ENCODE measurements at regions of chr18 and their contacts with region 1.

Region 1: DNA sequence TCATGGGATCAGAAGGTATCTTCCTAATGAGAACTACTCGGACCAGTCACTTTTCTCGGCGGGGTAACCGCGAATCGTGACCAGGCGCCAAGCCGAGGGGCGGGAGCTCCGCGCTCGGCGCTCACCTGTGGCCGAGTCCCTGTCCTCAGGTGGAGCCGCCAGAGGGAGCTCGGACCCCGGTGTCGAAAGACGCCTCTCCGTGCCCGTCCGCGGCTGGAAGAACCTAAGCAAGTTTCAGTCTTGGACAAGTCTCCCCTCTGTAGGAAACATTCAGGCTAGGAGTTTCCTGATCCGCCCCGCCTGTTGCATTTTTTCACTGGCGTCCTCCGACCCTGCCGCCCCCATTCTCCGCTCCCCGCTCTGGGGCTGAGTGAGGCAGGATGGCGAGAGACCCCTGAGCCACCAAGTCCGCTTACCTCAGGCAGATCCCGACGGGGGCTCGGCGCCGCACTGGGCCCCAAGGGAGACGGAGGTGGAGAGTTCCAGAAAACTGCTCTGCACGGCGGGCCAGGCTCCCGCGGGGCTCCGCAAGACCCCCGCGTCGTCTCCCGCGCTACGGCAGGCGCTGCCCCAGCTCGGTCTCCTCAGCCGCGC is 478 bp downstream of the DSEL start:
- DNase-seq: peak; percentile 67 to 77
- ATAC-seq: peak; percentile 68 to 69
- H3K4me3 ChIP-seq: peak overlapping the region; percentile 60 to 95 (median 78)
- H3K27ac ChIP-seq: peak overlapping the region; percentile 71 to 85 (median 77)
- H3K4me1 ChIP-seq: peaks cover 6 to 13% of the 10 kb centered on the region in 2 donors
- H3K27me3 ChIP-seq: no peaks in the 10 kb centered on the region
- CTCF ChIP-seq: peak; percentile 39 to 78 (median 68)
- POLR2A ChIP-seq: no peak

Region 2: GRCh38 chr18:66724664-66725356 is 791.2 kb before region 1 on chr18:
- in situ Hi-C with region 1: no loop called
- intact Hi-C with region 1: no loop called
- DNase-seq: peak in 1 of 2 donors; percentile 14
- ATAC-seq: no peak
- H3K4me3 ChIP-seq: no peak overlapping the region
- H3K27ac ChIP-seq: no peak overlapping the region
- H3K4me1 ChIP-seq: no peaks in the 10 kb centered on the region
- H3K27me3 ChIP-seq: no peaks in the 10 kb centered on the region
- CTCF ChIP-seq: no peak
- POLR2A ChIP-seq: no peak

Region 3: DNA sequence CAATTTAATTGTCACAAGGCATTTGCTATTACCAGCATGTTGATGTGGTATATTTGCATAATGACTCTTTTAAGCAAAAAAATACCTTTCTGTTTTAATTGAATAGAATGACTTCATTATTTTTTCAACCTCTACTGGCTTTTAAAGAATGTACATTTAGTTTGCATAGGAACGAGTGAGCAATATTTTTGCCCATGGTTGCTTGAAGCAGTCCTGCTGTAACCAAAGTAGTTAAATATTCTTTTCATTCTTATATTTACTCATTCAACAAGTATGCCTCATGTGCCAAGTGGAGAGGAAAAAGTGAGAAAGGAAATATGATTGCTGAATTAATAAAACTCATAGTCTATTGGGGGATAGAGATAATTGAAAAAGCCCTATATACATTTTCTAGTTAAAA is 184.2 kb before region 1 on chr18:
- in situ Hi-C with region 1: no loop called
- intact Hi-C with region 1: no loop called
- DNase-seq: no peak
- ATAC-seq: no peak
- H3K4me3 ChIP-seq: no peak overlapping the region
- H3K27ac ChIP-seq: no peak overlapping the region
- H3K4me1 ChIP-seq: no peaks in the 10 kb centered on the region
- H3K27me3 ChIP-seq: no peaks in the 10 kb centered on the region
- CTCF ChIP-seq: no peak
- POLR2A ChIP-seq: no peak

Region 4: GRCh38 chr18:67359873-67360838 is 155.9 kb before region 1 on chr18:
- in situ Hi-C with region 1: no loop called
- intact Hi-C with region 1: loop called (anchors 10 kb)
- DNase-seq: peak; percentile 53 to 77
- ATAC-seq: peak; percentile 99
- H3K4me3 ChIP-seq: peak overlapping the region; percentile 4 to 43 (median 24)
- H3K27ac ChIP-seq: peak overlapping the region; percentile 61 to 83 (median 76)
- H3K4me1 ChIP-seq: peaks cover 0 to 16% of the 10 kb centered on the region in 2 donors
- H3K27me3 ChIP-seq: no peaks in the 10 kb centered on the region
- CTCF ChIP-seq: no peak
- POLR2A ChIP-seq: no peak

Region 5: DNA sequence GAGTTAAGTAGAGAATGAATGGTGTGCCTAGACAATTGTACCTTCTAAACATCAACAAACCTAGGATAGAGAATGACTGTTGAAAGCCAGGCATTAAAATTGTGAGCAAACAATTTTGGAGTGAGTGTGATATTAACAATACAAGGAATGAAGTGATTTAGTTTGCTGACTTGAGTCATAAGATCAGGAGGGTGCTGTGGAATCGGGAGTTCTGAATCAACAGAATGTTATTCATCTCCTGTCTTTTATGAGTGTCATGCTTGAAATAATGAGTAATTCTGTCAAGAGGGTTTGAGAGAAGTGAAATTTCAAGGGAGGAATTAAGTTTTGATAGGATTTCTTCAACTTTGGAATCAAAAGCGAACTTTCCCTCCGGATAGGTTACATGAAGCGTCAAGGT is 214.8 kb after region 1 on chr18:
- in situ Hi-C with region 1: no loop called
- intact Hi-C with region 1: no loop called
- DNase-seq: no peak
- ATAC-seq: no peak
- H3K4me3 ChIP-seq: no peak overlapping the region
- H3K27ac ChIP-seq: no peak overlapping the region
- H3K4me1 ChIP-seq: no peaks in the 10 kb centered on the region
- H3K27me3 ChIP-seq: no peaks in the 10 kb centered on the region
- CTCF ChIP-seq: no peak
- POLR2A ChIP-seq: no peak

Region 6: GRCh38 chr18:68714609-68715496 is 1198.8 kb after region 1 on chr18 and contains the start of gene TMX3:
- in situ Hi-C with region 1: no loop called
- intact Hi-C with region 1: loop called (anchors 2 kb)
- DNase-seq: peak; percentile 64 to 81
- ATAC-seq: peak; percentile 94 to 95
- H3K4me3 ChIP-seq: peak within 1 kb of the TSS; percentile 82 to 99 (median 90)
- H3K27ac ChIP-seq: peak within 1 kb of the TSS; percentile 72 to 83 (median 77)
- H3K4me1 ChIP-seq: peaks cover 16 to 20% of the 10 kb centered on the region in 2 donors
- H3K27me3 ChIP-seq: no peaks in the 10 kb centered on the region
- CTCF ChIP-seq: no peak
- POLR2A ChIP-seq: peak in 1 of 2 donors; percentile 13
- total RNA-seq, gene TMX3: 13.7 to 23.3 (median 16.7) TPM